Panc1 (cell line): ENCODE measurements at regions of chr1 and their contacts with region 1.

Region 1: GRCh38 chr1:6727535-6727934 is 25.9 kb upstream of the DNAJC11 start:
- DNase-seq: peak; percentile 52
- ATAC-seq: peak; percentile 75
- H3K4me3 ChIP-seq: no peak overlapping the region
- H3K27ac ChIP-seq: no peak overlapping the region
- H3K4me1 ChIP-seq: peaks cover 5% of the 10 kb centered on the region; the same call in 1 of the 2 replicates
- H3K27me3 ChIP-seq: no peaks in the 10 kb centered on the region
- CTCF ChIP-seq: peak; percentile 98

Region 2: GRCh38 chr1:6614929-6615785 is 112.4 kb before region 1 on chr1:
- CTCF ChIA-PET with region 1: interaction called, 19 read pairs
- POLR2A ChIA-PET with region 1: no interaction called
- in situ Hi-C with region 1: no loop called
- intact Hi-C with region 1: no loop called
- DNase-seq: no peak
- ATAC-seq: no peak
- H3K4me3 ChIP-seq: peak overlapping the region; percentile 57 to 67
- H3K27ac ChIP-seq: peak overlapping the region; percentile 76
- H3K4me1 ChIP-seq: peaks cover 14% of the 10 kb centered on the region
- H3K27me3 ChIP-seq: no peaks in the 10 kb centered on the region
- CTCF ChIP-seq: no peak

Region 3: DNA sequence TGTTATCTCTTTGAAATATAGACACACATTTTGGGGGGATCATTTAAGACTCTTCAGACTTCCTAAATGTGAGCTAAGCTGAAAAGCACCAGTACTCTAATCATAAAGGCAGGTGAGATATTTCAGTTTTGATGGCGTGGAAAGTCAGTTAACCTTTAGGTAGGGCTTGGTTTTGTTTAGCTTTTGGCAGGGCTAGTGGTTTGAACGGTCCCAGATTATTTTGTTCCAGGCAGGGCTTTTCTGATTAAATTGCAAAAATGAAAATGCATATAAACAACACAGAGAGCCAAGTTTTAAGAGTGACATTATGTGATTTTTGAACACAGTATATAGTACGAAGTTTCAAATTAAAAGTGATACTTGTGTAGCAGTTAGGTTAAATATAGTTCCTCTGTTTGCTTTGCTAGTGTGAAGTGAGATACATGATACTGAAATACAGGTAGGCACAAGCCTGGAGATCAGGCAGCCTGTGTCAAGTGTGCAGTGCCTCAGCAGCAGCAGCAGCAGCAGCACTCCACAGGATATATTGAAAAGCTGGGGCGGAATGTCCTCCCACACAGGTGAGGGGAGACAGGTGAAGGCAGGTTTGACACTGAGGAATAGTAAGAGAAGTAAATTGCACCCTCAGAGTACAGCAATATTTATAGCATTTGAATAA is 105.1 kb after region 1 on chr1:
- CTCF ChIA-PET with region 1: no interaction called
- POLR2A ChIA-PET with region 1: no interaction called
- in situ Hi-C with region 1: no loop called
- intact Hi-C with region 1: no loop called
- DNase-seq: no peak
- ATAC-seq: no peak
- H3K4me3 ChIP-seq: no peak overlapping the region
- H3K27ac ChIP-seq: no peak overlapping the region
- H3K4me1 ChIP-seq: no peaks in the 10 kb centered on the region
- H3K27me3 ChIP-seq: no peaks in the 10 kb centered on the region
- CTCF ChIP-seq: no peak

Region 4: GRCh38 chr1:6870086-6870485 is 142.6 kb after region 1 on chr1:
- CTCF ChIA-PET with region 1: no interaction called
- POLR2A ChIA-PET with region 1: no interaction called
- in situ Hi-C with region 1: no loop called
- intact Hi-C with region 1: loop called (anchors 5 kb)
- DNase-seq: no peak
- ATAC-seq: no peak
- H3K4me3 ChIP-seq: no peak overlapping the region
- H3K27ac ChIP-seq: no peak overlapping the region
- H3K4me1 ChIP-seq: peaks cover 19% of the 10 kb centered on the region
- H3K27me3 ChIP-seq: no peaks in the 10 kb centered on the region
- CTCF ChIP-seq: no peak

Region 5: DNA sequence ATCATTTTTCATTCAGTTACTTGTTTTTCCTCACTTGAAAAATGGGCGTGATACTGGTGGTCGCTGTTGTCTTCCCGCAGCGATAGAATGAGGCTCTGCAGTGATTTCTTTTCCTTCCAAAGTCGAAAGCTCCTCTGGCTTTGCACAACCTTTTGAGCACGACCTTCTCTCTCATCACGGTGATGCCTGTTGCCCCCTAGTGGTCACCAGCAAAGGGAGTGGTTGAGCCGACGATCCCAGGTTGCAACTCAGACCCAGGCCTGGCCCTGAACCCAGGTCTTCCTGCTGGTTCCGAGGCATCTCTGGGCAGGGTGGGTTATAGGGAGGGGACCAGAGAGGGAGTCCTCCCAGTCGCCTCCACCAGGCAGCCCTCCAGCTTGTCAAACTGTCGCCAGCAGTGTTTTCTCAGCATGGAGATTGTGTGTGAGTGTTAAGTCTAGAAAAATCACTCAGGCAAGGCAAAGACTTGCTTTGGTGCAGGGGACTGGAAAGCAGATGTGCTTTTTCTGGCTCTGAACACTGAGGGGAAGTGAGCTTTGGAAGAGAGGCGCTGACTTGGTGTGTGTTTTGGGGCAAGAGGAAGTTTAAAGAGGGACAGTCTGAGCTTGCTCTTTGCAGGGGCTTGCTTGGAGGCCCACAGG is 343.0 kb after region 1 on chr1:
- CTCF ChIA-PET with region 1: interaction called, 6 read pairs
- POLR2A ChIA-PET with region 1: no interaction called
- in situ Hi-C with region 1: no loop called
- intact Hi-C with region 1: loop called (anchors 5 kb)
- DNase-seq: peak; percentile 54
- ATAC-seq: peak; percentile 95
- H3K4me3 ChIP-seq: peak overlapping the region in 1 of 2 experiments; percentile 14; a peak in 1 of 4 replicates
- H3K27ac ChIP-seq: no peak overlapping the region
- H3K4me1 ChIP-seq: no peaks in the 10 kb centered on the region
- H3K27me3 ChIP-seq: peaks cover 12% of the 10 kb centered on the region
- CTCF ChIP-seq: peak; percentile 96

Region 6: GRCh38 chr1:7218210-7218832 is 490.8 kb after region 1 on chr1:
- CTCF ChIA-PET with region 1: no interaction called
- POLR2A ChIA-PET with region 1: no interaction called
- in situ Hi-C with region 1: no loop called
- intact Hi-C with region 1: loop called (anchors 5 kb)
- DNase-seq: no peak
- ATAC-seq: no peak
- H3K4me3 ChIP-seq: no peak overlapping the region
- H3K27ac ChIP-seq: no peak overlapping the region
- H3K4me1 ChIP-seq: no peaks in the 10 kb centered on the region
- H3K27me3 ChIP-seq: no peaks in the 10 kb centered on the region
- CTCF ChIP-seq: peak; percentile 88

Region 7: GRCh38 chr1:7281821-7282220 is 554.3 kb after region 1 on chr1:
- CTCF ChIA-PET with region 1: interaction called, 14 read pairs
- POLR2A ChIA-PET with region 1: no interaction called
- in situ Hi-C with region 1: no loop called
- intact Hi-C with region 1: no loop called
- DNase-seq: no peak
- ATAC-seq: no peak
- H3K4me3 ChIP-seq: no peak overlapping the region
- H3K27ac ChIP-seq: no peak overlapping the region
- H3K4me1 ChIP-seq: no peaks in the 10 kb centered on the region
- H3K27me3 ChIP-seq: no peaks in the 10 kb centered on the region
- CTCF ChIP-seq: no peak

Region 8: GRCh38 chr1:7432102-7432899 is 704.8 kb after region 1 on chr1:
- CTCF ChIA-PET with region 1: no interaction called
- POLR2A ChIA-PET with region 1: no interaction called
- in situ Hi-C with region 1: no loop called
- intact Hi-C with region 1: no loop called
- DNase-seq: no peak
- ATAC-seq: no peak
- H3K4me3 ChIP-seq: no peak overlapping the region
- H3K27ac ChIP-seq: no peak overlapping the region
- H3K4me1 ChIP-seq: no peaks in the 10 kb centered on the region
- H3K27me3 ChIP-seq: no peaks in the 10 kb centered on the region
- CTCF ChIP-seq: no peak